ENCODE measurements at regions of chr11 and their contacts with region 1.

Region 1: DNA sequence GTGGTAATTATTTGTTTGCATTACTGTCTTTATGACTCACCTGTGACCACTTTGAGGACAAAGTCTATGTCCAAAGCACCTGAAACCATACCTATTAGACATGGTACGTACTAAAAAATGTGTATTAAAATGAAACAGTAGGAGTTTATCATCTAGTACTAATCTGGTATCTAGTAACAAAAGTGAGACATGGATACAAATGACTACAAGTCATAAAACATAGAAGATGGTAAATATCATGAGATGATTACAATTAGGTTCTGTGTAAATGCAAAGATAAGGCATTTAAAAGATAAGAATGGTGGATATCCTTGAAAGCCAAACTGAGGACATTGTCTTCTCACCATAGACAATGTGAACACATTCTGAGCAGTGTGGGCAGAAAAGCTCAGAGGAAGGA is 113.5 kb upstream of the GUCY1A2 start:
- DNase-seq: no peak
- H3K4me3 ChIP-seq: no peak overlapping the region
- H3K27ac ChIP-seq: no peak overlapping the region
- H3K4me1 ChIP-seq: no peaks in the 10 kb centered on the region
- H3K27me3 ChIP-seq: no peaks in the 10 kb centered on the region
- CTCF ChIP-seq: no peak
- EP300 ChIP-seq: no peak
- POLR2A ChIP-seq: no peak

Region 2: GRCh38 chr11:107928046-107928766 is 796.5 kb after region 1 on chr11 and contains the start of gene RAB39A:
- intact Hi-C with region 1: loop called in 1 of 4 experiments (anchors 5 kb)
- DNase-seq: peak; percentile 19 to 72 (median 31)
- H3K4me3 ChIP-seq: peak within 1 kb of the TSS; percentile 12
- H3K27ac ChIP-seq: no peak within 1 kb of the TSS
- H3K4me1 ChIP-seq: peaks cover 2% of the 10 kb centered on the region
- H3K27me3 ChIP-seq: no peaks in the 10 kb centered on the region
- CTCF ChIP-seq: no peak
- EP300 ChIP-seq: no peak
- POLR2A ChIP-seq: no peak
- total RNA-seq, gene RAB39A: 0.28 to 2.1 (median 0.43) TPM